PC-9 (cell line): ENCODE measurements at regions of chr11 and their contacts with region 1.

Region 1: DNA sequence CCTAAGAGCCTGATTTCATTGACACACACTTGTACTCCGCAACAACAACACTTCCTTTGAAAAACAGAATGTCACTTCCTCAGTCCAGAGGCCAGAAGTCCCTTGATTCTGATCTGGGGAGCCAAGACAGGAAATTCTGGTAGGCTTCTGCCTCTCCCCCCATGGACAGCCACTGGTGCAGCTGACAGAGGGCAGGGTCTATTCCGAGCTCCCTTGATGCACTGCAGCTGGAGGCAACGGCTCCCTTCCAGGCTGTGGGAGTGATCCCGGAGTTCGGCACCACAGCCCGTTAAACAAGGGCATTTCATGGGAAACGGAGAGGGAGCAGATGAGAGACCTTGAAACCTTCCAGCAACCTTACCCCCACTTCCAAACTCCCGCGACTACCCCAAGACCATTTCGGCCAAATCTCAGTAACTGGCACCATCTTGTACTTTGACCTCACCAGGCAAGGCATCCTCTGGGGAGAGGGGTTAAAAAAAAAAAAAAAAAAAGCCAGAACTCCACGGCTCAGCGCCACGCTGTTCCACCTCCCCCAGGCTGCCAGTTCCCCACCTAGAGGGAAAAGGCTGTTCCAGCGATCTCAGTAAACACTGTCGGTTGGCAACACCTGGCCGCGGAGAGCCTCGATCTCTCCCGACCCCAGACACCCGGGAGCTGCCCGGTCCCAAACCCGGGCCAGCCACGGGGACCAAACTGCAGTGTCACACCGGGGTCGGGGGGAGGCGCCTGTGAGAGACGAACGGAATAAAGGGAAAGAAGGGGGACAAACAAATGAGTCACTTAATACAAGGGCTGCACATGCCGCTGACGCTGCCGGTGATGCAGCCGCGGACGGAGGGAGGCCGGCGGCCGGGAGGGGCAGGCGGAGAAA is 1.1 kb downstream of the GAB2 start:
- DNase-seq: peak; percentile 81 to 84
- H3K4me3 ChIP-seq: peak overlapping the region; percentile 84
- H3K27ac ChIP-seq: peak overlapping the region; percentile 61
- H3K4me1 ChIP-seq: peaks cover 26% of the 10 kb centered on the region
- H3K27me3 ChIP-seq: no peaks in the 10 kb centered on the region
- CTCF ChIP-seq: peak; percentile 72

Region 2: GRCh38 chr11:77637345-77638165 is 779.0 kb before region 1 on chr11 and contains the start of gene CLNS1A:
- CTCF ChIA-PET with region 1: no interaction called
- POLR2A ChIA-PET with region 1: no interaction called
- intact Hi-C with region 1: no loop called
- DNase-seq: peak; percentile 84 to 91
- H3K4me3 ChIP-seq: peak within 1 kb of the TSS; percentile 84
- H3K27ac ChIP-seq: peak within 1 kb of the TSS; percentile 65
- H3K4me1 ChIP-seq: peaks cover 19% of the 10 kb centered on the region
- H3K27me3 ChIP-seq: no peaks in the 10 kb centered on the region
- CTCF ChIP-seq: no peak
- total RNA-seq, gene CLNS1A: 190 and 232 TPM in 2 replicates

Region 3: GRCh38 chr11:77747381-77747969 is 669.1 kb before region 1 on chr11:
- CTCF ChIA-PET with region 1: interaction called, 13 read pairs
- POLR2A ChIA-PET with region 1: no interaction called
- intact Hi-C with region 1: no loop called
- DNase-seq: no peak
- H3K4me3 ChIP-seq: no peak overlapping the region
- H3K27ac ChIP-seq: peak overlapping the region; percentile 11; the same call in 1 of the 2 replicates
- H3K4me1 ChIP-seq: peaks cover 10% of the 10 kb centered on the region
- H3K27me3 ChIP-seq: no peaks in the 10 kb centered on the region
- CTCF ChIP-seq: no peak

Region 4: DNA sequence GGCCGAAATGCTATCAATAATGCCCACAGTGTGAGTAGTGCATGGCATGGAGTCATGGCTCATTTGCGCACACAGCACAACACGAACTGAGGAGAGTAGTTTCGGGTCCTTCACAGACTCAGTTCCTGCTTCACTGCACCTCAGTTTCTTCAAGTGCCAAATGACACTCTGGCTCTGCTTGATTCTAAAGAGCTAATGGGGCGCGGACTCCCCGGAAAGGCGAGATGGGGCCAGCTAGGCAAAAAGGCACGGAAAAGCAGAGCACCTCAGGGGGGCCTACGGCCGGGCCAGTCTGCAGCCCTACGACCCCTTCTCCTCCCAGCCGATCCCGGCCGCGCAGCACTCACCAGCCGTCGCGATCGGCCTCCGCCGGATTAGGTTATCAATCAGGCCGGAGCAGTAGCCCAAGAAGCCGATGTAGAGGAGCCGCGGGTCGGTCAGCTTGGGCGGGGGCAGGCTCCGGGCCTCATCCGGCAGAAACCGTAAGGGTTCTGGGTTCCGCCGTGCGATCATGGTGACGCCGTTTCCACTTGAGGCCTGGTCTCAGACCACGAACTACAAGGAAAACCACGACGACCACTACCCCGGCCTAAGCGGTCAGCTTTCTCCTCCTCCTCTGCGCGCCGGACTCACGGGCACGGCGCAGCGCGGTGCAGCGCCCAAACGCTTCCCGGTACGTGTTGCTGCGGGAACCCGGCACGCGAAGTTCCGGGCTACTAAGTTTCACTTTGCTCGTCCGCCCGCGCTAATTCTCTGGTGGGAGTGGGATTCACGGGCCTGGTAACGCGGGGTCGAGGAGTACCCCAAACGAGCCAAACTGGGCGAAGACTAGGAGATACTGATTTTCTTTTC is 337.1 kb before region 1 on chr11 and contains the start of gene NDUFC2:
- CTCF ChIA-PET with region 1: no interaction called
- POLR2A ChIA-PET with region 1: interaction called, 14 read pairs
- intact Hi-C with region 1: loop called (anchors 5 kb)
- DNase-seq: peak; percentile 73 to 82
- H3K4me3 ChIP-seq: peak within 1 kb of the TSS; percentile 89
- H3K27ac ChIP-seq: peak within 1 kb of the TSS; percentile 46
- H3K4me1 ChIP-seq: peaks cover 35% of the 10 kb centered on the region
- H3K27me3 ChIP-seq: no peaks in the 10 kb centered on the region
- CTCF ChIP-seq: 0 out of 2 replicates have a peak, but pooled peaks have one; percentile 14
- total RNA-seq, gene NDUFC2: 380 and 394 TPM in 2 replicates

Region 5: GRCh38 chr11:78188286-78189173 is 228.0 kb before region 1 on chr11 and contains the starts of genes KCTD21 and USP35:
- CTCF ChIA-PET with region 1: interaction called, 4 read pairs
- POLR2A ChIA-PET with region 1: interaction called, 3 read pairs
- intact Hi-C with region 1: loop called (anchors 1 kb)
- DNase-seq: peak; percentile 97 to 99
- H3K4me3 ChIP-seq: peak within 1 kb of the TSS; percentile 80
- H3K27ac ChIP-seq: no peak within 1 kb of the TSS
- H3K4me1 ChIP-seq: peaks cover 43% of the 10 kb centered on the region
- H3K27me3 ChIP-seq: no peaks in the 10 kb centered on the region
- CTCF ChIP-seq: no peak
- total RNA-seq, gene KCTD21: 16.1 and 16.5 TPM in 2 replicates
- total RNA-seq, gene USP35: 12.8 and 13.5 TPM in 2 replicates

Region 6: DNA sequence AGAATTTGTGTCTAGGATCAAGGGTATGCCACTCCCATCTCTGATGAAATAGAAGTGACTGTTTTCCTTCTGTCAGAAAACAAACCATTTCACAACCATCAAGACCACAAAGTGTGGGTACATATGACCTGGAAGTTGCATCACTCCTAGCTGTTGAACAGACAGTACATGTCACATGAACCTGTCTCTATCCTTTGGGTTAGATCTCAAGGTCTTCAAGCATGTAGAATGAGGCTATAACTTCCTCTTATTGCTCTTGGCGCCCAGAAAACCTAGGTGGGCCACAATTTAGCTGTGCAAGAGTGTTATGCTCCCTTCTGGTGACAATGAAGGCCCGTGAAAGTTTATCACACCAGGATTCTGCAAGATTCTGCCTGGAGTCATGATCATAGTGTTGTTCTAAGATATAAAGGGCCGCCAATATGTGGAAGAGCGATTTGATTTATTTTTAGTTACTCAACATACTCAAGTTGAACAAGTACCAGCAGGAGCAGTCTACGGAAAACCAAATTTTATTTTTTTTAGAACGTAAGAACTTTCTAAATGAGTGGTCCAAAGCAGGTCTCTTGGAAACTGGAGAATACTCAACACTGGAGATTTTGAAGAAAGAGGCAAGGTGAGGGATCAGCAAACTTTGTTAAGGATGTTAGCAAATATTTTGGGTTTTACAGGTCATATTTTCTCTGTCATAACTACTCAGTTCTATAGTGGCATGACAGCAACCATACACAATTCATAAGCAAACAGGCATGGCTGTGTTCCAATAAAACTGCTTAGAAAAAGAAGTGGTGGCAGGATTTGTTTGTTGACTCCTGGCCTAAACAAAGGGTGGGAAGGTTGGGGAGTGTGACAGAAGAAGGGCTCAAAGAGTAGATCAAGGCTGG is 126.0 kb before region 1 on chr11:
- CTCF ChIA-PET with region 1: no interaction called
- POLR2A ChIA-PET with region 1: no interaction called
- intact Hi-C with region 1: loop called (anchors 10 kb)
- DNase-seq: peak in 1 of 2 experiments; percentile 87
- H3K4me3 ChIP-seq: no peak overlapping the region
- H3K27ac ChIP-seq: peak overlapping the region; percentile 43; the same call in 1 of the 2 replicates
- H3K4me1 ChIP-seq: peaks cover 23% of the 10 kb centered on the region
- H3K27me3 ChIP-seq: no peaks in the 10 kb centered on the region
- CTCF ChIP-seq: no peak

Region 7: GRCh38 chr11:78574386-78575381 is 158.1 kb after region 1 on chr11 and contains the start of gene NARS2:
- CTCF ChIA-PET with region 1: no interaction called
- POLR2A ChIA-PET with region 1: no interaction called
- intact Hi-C with region 1: loop called (anchors 5 kb)
- DNase-seq: peak; percentile 95 to 97
- H3K4me3 ChIP-seq: peak within 1 kb of the TSS; percentile 71
- H3K27ac ChIP-seq: peak within 1 kb of the TSS; percentile 13
- H3K4me1 ChIP-seq: peaks cover 23% of the 10 kb centered on the region; the same call in 1 of the 2 replicates
- H3K27me3 ChIP-seq: no peaks in the 10 kb centered on the region
- CTCF ChIP-seq: no peak
- total RNA-seq, gene NARS2: 22.4 and 25.1 TPM in 2 replicates